ENCODE measurements at regions of chr10 and their contacts with region 1.

Region 1: DNA sequence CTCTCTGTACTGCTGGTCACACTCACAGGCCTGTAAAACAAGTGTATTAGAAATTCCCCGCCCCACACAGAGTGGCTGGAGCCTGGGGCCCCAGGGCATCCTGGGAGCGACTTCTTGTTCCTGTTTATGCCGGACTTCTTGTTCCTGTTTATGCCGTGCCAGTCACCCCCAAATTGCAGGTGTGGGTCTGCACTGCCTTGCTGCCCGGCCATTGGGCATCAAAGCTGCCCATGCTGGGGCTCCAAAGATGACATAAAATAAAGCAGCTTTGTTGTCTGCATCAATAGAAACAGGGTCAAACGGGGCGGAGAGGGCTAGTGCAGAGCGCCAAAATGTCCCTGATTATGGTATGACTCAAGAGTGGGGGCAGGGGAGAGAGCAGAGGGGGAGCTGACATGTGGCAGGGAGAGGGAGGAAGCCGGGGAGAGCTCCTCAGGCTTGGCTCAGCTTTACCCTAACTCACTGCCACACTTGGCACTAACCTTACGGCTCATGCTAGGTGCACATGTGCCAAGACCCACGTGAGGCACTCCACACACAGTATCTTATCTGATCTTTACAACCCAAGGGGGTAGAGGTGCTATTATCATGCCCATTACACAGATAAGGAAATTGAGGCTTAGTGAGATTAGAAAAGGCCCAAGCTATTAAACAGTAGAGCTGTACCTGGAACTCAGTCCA is 98.4 kb downstream of the PIP4K2A start:
- DNase-seq: no peak
- H3K4me3 ChIP-seq: no peak overlapping the region
- H3K27ac ChIP-seq: no peak overlapping the region
- H3K4me1 ChIP-seq: peaks cover 58% of the 10 kb centered on the region
- H3K27me3 ChIP-seq: no peaks in the 10 kb centered on the region
- CTCF ChIP-seq: no peak

Region 2: DNA sequence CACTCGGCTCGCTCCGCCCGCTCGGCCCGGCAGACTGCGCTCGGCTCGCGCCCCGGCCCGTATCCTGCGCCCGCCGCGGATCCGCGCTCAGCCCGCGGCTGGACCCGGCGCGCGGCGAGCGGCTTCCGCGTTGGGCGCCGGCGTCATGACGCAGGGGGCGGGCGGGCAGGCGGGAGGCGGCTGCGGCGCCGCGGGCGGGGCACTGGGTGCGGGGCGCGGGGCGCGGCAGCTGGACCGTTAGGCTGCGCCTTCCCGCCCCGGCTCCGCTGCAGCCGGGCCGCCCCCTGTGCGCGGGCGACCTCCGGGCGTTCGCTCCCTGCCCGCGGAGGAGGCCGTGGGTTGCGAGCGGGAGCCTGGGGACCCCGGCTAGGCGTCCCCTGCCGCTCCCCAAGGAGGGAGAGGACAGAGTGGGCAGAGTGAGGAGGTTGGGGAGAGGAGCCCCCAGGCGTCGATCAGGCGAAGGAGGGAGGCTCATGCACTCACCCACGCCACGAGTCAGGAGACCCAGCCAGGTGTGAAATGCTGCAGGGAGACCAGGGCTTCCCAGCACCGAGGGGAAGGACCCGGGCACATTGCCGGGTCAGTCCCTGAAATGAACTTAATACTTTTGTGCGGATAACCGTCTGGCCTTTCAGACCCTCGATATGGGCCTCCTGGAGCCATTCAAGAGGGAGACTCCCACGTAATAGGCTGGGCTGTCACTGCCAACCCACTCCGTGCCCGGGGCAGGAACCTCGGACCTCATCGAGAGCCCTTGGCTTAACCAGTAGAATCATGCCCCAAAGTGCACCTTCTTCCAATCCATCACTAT is 98.7 kb after region 1 on chr10 and contains the start of gene PIP4K2A:
- CTCF ChIA-PET with region 1: no interaction called
- POLR2A ChIA-PET with region 1: no interaction called
- intact Hi-C with region 1: loop called (anchors 5 kb)
- DNase-seq: peak; percentile 85
- H3K4me3 ChIP-seq: peak within 1 kb of the TSS; percentile 90
- H3K27ac ChIP-seq: peak within 1 kb of the TSS; percentile 66
- H3K4me1 ChIP-seq: peaks cover 10% of the 10 kb centered on the region
- H3K27me3 ChIP-seq: no peaks in the 10 kb centered on the region
- CTCF ChIP-seq: no peak
- total RNA-seq, gene PIP4K2A: 18.3 and 19.8 TPM in 2 replicates

Measured in A673 (cell line).